ENCODE measurements at regions of chr2 and their contacts with region 1.

Region 1: GRCh38 chr2:191677646-191678436 is at the start of gene NABP1:
- DNase-seq: peak; percentile 99
- ATAC-seq: peak; percentile 73
- H3K4me3 Mint-ChIP-seq: peak within 1 kb of the TSS; percentile 98
- H3K27ac Mint-ChIP-seq: peak within 1 kb of the TSS; percentile 99
- H3K4me1 Mint-ChIP-seq: peaks cover 51% of the 10 kb centered on the region
- H3K27me3 Mint-ChIP-seq: no peaks in the 10 kb centered on the region
- total RNA-seq, gene NABP1: 72.6 to 75.9 TPM

Region 2: DNA sequence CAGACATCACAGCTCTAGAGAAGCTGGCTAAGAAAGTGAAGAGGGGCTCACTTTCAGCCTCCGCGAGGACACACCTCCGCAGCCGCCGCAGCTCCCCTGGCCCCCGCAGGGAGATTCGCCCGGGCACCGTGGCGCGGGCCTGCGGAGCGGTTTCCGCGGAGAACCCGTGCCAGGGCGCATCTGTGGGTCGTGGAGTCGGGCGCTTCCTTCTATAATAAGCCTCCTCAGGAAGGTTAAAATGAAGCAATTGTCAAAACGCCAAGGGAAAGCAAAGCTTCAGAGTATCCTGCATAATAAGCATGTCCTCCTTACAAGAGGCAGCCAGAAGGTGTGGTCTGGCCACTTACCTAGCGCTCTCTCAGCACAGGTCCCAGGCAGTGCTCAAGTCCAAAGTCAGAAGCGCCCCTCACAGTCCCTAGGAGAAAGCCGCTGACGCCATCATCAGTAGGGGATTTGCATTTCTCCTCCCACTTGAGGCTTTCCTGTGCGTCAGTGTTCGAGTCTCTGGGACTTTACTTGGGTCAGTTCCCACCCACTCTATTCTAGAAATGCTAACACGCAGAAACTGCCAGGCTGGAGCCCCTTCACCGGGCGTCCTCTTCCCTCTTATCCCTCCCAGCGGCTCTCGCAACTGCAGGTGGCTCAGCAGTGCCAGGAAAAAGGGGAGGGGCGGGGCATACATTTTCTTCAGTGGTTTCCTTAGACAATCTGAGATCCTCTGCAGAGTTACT is 527.1 kb before region 1 on chr2 and contains the start of gene STAT4:
- POLR2A ChIA-PET with region 1: interaction called, 28 read pairs
- DNase-seq: peak; percentile 76
- ATAC-seq: peak; percentile 85
- H3K4me3 Mint-ChIP-seq: peak within 1 kb of the TSS; percentile 89
- H3K27ac Mint-ChIP-seq: peak within 1 kb of the TSS; percentile 94
- H3K4me1 Mint-ChIP-seq: peaks cover 57% of the 10 kb centered on the region
- H3K27me3 Mint-ChIP-seq: no peaks in the 10 kb centered on the region
- total RNA-seq, gene STAT4: 170 to 177 TPM

Region 3: DNA sequence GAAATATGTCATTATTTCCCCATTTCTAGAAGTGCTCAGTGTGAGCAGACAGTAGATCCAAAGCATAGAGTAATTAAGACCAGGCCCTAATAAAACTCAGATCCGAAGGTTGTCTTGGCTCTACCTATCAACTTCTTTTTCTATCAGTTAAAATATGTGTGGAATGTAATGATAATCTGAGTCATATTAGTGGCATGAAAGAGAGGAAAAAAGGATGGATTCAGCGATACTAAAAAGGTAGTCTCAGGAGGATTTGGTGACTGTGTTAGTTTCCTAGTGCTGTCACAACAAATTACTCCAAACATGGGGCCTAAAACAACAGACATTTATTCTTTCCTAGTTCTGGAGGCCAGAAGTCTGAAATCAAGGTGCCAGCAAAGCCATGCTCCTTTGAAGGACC is 103.6 kb before region 1 on chr2:
- POLR2A ChIA-PET with region 1: interaction called, 11 read pairs
- DNase-seq: no peak
- ATAC-seq: no peak
- H3K4me3 Mint-ChIP-seq: no peak overlapping the region
- H3K27ac Mint-ChIP-seq: no peak overlapping the region
- H3K4me1 Mint-ChIP-seq: peaks cover 23% of the 10 kb centered on the region
- H3K27me3 Mint-ChIP-seq: peaks cover 23% of the 10 kb centered on the region

Region 4: GRCh38 chr2:191625016-191625415 is 52.8 kb before region 1 on chr2:
- POLR2A ChIA-PET with region 1: interaction called, 234 read pairs
- DNase-seq: no peak
- ATAC-seq: peak; percentile 86
- H3K4me3 Mint-ChIP-seq: peak overlapping the region; percentile 7
- H3K27ac Mint-ChIP-seq: peak overlapping the region; percentile 50
- H3K4me1 Mint-ChIP-seq: peaks cover 36% of the 10 kb centered on the region
- H3K27me3 Mint-ChIP-seq: no peaks in the 10 kb centered on the region

Region 5: DNA sequence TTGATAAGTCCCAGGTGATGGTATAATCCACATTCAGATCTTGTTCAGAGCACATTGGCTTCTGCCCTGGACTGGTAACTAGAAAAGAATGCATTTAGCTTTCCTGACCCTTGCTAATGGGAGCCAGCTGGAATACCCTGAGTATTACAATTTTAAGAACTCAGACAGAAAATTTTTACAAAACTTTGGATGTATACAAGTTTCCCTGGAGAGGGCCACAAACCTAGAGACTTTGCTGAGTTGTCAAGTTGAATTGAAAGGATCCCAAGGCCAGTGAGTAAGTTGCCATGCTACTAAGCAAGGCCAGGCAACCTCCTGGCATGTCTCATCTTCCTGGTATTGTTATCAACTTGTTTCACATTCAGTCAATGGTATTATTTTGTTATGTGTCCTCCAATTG is 19.9 kb before region 1 on chr2:
- POLR2A ChIA-PET with region 1: interaction called, 13 read pairs
- DNase-seq: no peak
- ATAC-seq: no peak
- H3K4me3 Mint-ChIP-seq: no peak overlapping the region
- H3K27ac Mint-ChIP-seq: no peak overlapping the region
- H3K4me1 Mint-ChIP-seq: peaks cover 14% of the 10 kb centered on the region
- H3K27me3 Mint-ChIP-seq: peaks cover 2% of the 10 kb centered on the region

Region 6: DNA sequence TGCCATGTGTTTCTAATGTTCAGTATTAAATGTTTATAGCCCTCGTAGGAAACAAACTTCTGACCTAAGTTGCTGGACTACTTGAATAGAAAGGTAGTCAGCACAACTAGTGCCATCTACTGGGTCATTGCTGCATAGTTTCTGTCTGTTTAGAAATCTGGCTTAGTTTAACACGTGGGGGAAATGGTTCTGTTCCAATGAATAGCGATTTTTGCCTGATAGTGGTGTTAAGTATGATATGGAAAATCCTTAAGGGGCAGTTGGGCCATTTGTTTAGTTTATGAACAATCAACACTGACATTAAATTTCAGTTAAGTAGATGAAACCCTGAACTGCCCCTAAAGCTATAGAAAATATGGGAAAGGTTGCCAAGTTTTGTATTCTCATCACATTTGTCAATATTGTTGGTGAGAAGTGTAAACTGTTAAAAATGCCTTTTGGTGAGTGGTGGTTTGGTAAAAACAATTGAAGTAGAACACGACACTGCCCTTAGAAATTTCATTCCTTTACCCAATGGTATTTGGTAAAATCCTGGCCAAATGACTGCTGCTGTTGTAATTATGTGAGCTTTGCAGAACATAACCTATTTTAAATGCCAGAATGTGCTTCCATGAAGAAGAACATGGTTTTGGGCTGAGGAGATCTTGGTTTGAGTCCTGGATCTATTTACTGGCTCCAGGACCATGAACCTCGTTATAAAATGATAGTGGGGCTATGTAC is 13.3 kb after region 1 on chr2:
- POLR2A ChIA-PET with region 1: interaction called, 22 read pairs
- DNase-seq: no peak
- ATAC-seq: peak; percentile 77
- H3K4me3 Mint-ChIP-seq: no peak overlapping the region
- H3K27ac Mint-ChIP-seq: no peak overlapping the region
- H3K4me1 Mint-ChIP-seq: peaks cover 8% of the 10 kb centered on the region
- H3K27me3 Mint-ChIP-seq: no peaks in the 10 kb centered on the region

Region 7: DNA sequence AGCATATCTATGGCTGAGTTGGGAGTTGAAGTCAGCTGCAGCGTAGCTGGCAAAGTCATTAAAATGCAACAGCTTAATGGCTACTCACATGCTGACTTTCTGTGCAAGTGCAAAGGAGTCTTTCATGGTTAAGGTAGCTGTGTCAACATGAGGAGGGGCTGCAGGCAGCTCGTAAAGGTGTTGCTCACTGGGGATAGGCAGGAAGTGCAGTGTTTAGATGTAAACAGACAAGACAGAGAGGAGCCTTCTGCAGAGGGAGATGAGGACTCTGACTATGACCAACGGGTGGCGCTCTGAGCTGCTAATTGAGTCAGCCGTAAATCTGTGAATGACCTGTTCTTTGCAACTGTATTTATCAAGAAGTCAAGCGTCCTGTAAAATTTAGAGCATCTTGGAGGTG is 191.3 kb after region 1 on chr2:
- POLR2A ChIA-PET with region 1: no interaction called
- DNase-seq: no peak
- ATAC-seq: no peak
- H3K4me3 Mint-ChIP-seq: no peak overlapping the region
- H3K27ac Mint-ChIP-seq: no peak overlapping the region
- H3K4me1 Mint-ChIP-seq: no peaks in the 10 kb centered on the region
- H3K27me3 Mint-ChIP-seq: peaks cover 7% of the 10 kb centered on the region

Measured in activated naive CD8-positive, alpha-beta T cell treated with anti-CD3 and anti-CD28 coated beads, Interleukin-2, amount 10 ng/mL, durations not matched to agents 7 days and 5 days (primary cell).